ENCODE measurements at regions of chr12 and their contacts with region 1.

Region 1: DNA sequence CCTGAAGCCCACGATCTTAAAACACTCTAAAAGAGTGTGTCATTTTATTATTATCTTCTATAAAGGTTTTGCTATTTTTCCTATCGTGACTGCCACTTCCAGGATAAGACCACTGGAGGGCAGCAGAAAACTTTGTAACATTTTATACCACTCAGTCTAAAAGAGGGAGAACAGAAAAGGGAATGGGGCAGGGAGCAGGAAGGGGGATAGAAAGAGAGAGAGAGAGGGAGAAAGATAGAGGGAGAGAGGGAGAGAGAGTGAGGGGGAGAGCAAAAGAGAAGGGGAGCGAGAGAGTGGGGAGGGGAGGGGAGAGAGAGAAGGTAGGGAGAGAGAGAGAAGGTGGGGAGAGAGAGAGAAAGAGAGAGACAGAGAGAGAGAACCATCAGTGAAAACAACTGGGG is 2.0 kb upstream of the ART4 start:
- DNase-seq: no peak
- H3K4me3 ChIP-seq: no peak overlapping the region
- H3K27ac ChIP-seq: peak overlapping the region; percentile 31
- H3K4me1 ChIP-seq: peaks cover 41% of the 10 kb centered on the region
- H3K27me3 ChIP-seq: no peaks in the 10 kb centered on the region
- CTCF ChIP-seq: peak; percentile 46 to 90 (median 59)
- POLR2A ChIP-seq: no peak

Region 2: GRCh38 chr12:14810953-14811483 is 34.3 kb before region 1 on chr12:
- intact Hi-C with region 1: no loop called
- DNase-seq: no peak
- H3K4me3 ChIP-seq: no peak overlapping the region
- H3K27ac ChIP-seq: no peak overlapping the region
- H3K4me1 ChIP-seq: no peaks in the 10 kb centered on the region
- H3K27me3 ChIP-seq: no peaks in the 10 kb centered on the region
- CTCF ChIP-seq: no peak
- POLR2A ChIP-seq: no peak

Region 3: DNA sequence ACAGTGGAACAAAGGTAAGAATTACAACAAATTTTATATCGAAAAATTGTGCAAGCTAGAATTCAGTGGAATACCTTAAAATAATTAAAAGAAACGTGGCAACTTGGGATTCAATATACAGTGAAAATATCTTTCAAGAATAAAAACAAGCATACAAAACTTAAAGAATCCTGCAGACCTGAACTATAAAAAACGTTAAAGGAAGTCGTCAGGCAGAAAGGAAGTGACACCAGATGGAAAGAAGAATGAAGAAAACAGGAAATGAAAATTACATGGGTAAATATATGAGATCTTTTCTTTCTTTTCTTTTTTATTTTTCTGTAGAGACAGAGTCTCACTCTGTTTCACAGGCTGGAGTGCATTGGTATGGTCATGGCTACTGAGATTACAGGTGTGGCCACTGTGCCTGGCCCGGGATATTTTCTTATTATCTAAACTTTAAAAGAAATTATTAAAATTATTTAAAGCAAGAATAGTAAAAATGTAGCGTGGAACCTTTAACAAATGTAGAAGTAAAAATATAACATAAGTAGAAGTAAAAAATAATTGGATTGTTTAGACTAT is 35.6 kb after region 1 on chr12:
- intact Hi-C with region 1: no loop called
- DNase-seq: no peak
- H3K4me3 ChIP-seq: no peak overlapping the region
- H3K27ac ChIP-seq: no peak overlapping the region
- H3K4me1 ChIP-seq: peaks cover 3% of the 10 kb centered on the region
- H3K27me3 ChIP-seq: no peaks in the 10 kb centered on the region
- CTCF ChIP-seq: no peak
- POLR2A ChIP-seq: no peak

Region 4: GRCh38 chr12:14892726-14893505 is 47.6 kb after region 1 on chr12:
- intact Hi-C with region 1: loop called (anchors 5 kb)
- DNase-seq: no peak
- H3K4me3 ChIP-seq: no peak overlapping the region
- H3K27ac ChIP-seq: peak overlapping the region; percentile 55
- H3K4me1 ChIP-seq: peaks cover 6% of the 10 kb centered on the region
- H3K27me3 ChIP-seq: no peaks in the 10 kb centered on the region
- CTCF ChIP-seq: no peak
- POLR2A ChIP-seq: no peak

Region 5: DNA sequence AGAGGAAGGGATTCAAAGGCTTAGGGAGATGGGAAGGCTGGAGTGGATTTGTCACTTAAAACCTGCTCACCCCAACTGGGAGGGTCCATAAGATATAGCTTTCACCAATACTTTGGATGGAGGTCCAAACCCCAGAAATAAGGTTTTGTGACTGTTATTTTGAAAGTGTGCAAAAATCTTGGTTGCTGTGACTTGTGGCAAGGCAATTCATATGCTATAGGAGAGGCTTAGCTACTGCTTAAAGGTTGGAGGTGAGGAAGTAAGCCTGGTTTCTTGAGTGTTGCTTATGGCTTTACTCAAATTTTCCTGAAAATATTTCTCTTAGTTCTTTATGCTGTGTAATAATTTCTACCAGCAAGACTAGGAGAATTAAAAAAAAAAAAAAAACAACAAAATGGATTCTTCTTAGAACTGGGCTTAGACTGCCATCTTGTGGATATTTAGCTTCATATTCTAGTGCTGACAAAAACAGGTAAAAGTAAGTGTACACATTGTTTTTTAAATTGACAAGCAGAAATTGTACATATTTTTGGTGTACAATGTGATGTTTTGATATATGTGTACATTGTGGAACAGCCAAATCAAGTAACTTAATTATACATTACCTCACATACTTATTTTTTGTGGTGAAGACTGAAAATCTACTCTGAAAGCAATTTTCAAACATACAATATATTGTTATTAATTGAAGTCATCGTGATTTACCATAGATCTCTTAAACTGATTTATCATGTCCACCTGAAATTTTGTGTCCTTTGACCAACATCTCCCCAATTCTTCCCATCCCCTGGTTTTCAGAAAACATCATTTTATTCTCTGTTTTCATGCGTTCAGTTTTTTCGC is 150.5 kb after region 1 on chr12:
- intact Hi-C with region 1: loop called (anchors 5 kb)
- DNase-seq: no peak
- H3K4me3 ChIP-seq: no peak overlapping the region
- H3K27ac ChIP-seq: no peak overlapping the region
- H3K4me1 ChIP-seq: peaks cover 24% of the 10 kb centered on the region
- H3K27me3 ChIP-seq: no peaks in the 10 kb centered on the region
- CTCF ChIP-seq: peak; percentile 11 to 69 (median 58)
- POLR2A ChIP-seq: no peak

Region 6: GRCh38 chr12:15220994-15221885 is 375.9 kb after region 1 on chr12 and contains the start of gene RERG:
- intact Hi-C with region 1: loop called (anchors 5 kb)
- DNase-seq: peak in 1 of 2 donors; percentile 93
- H3K4me3 ChIP-seq: peak within 1 kb of the TSS; percentile 60 to 61
- H3K27ac ChIP-seq: peak within 1 kb of the TSS; percentile 83
- H3K4me1 ChIP-seq: peaks cover 21% of the 10 kb centered on the region
- H3K27me3 ChIP-seq: no peaks in the 10 kb centered on the region
- CTCF ChIP-seq: peak; percentile 78 to 98 (median 95)
- POLR2A ChIP-seq: peak in 1 of 2 donors; percentile 16
- total RNA-seq, gene RERG: 31.9 TPM

Region 7: DNA sequence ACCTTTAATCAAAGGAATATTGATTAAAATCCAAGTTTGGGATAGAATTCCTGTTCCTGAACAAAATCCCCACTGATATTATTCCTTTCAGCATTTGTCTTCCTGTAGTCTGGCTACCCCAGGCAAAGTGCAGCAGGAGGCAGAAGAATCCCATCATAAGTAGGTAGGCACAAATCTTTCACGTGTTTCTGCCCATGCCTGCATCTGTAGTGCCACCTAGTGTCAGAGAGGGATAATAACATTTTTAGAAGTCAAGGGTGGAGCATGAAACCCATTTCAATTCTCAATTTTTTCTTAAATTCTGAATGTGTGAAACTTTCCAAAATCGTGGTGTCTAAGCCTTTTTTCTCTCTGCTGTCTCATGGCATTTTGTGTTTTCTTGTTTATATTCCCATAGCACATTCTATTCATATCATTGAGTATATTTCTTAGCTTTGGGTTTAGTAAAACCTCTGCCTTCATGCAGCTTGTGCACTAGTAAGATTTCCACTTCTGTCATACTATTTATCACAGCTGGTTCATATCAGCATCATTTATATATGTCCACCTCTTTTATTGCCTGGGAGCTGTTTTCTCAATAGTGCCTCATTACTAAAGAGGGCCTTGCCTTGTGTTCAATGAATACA is 423.7 kb after region 1 on chr12:
- intact Hi-C with region 1: loop called (anchors 5 kb)
- DNase-seq: no peak
- H3K4me3 ChIP-seq: no peak overlapping the region
- H3K27ac ChIP-seq: no peak overlapping the region
- H3K4me1 ChIP-seq: peaks cover 6% of the 10 kb centered on the region
- H3K27me3 ChIP-seq: no peaks in the 10 kb centered on the region
- CTCF ChIP-seq: peak; percentile 79 to 88 (median 84)
- POLR2A ChIP-seq: no peak

Region 8: DNA sequence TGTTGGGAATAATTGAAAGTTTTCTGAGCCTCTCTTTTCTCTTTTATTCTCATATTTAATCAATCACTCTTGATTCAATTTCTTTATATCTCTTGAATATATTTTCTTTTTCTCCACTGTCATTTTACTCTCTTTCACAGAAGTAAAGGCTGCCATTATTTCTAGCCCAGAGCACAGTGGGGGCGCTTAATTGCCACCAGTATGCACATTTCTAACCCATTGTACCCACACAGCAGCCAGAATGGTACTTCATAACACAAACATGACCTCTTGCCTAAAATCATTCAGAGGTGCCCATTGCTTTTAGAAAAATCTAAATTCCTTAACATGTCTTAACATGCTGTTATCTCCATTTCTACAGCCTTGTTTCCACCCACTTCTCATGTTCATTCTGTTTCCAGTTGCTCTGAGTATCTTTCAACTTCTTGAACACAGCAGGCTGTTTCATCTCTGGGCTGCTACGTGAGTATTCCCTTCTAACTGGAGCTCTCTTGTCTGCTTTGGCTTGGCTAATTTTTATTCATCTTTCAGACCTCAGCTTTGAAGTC is 1950.9 kb after region 1 on chr12:
- intact Hi-C with region 1: no loop called
- DNase-seq: no peak
- H3K4me3 ChIP-seq: no peak overlapping the region
- H3K27ac ChIP-seq: no peak overlapping the region
- H3K4me1 ChIP-seq: no peaks in the 10 kb centered on the region
- H3K27me3 ChIP-seq: no peaks in the 10 kb centered on the region
- CTCF ChIP-seq: no peak
- POLR2A ChIP-seq: no peak